ENCODE measurements at regions of chr1 and their contacts with region 1.

Region 1: GRCh38 chr1:179882243-179883039 is at the start of gene TOR1AIP1:
- DNase-seq: peak; percentile 89 to 97 (median 96)
- H3K4me3 ChIP-seq: peak within 1 kb of the TSS; percentile 59 to 97 (median 86)
- H3K27ac ChIP-seq: peak within 1 kb of the TSS; percentile 92 to 100 (median 100)
- H3K27me3 ChIP-seq: no peaks in the 10 kb centered on the region
- CTCF ChIP-seq: peak in 49 of 56 donors; percentile 12 to 64 (median 41)
- total RNA-seq, gene TOR1AIP1: 35.1 to 73.4 (median 45.9) TPM

Region 2: GRCh38 chr1:179954493-179955297 is 72.3 kb after region 1 on chr1 and contains the start of gene CEP350:
- intact Hi-C with region 1: loop called (anchors 1 kb)
- DNase-seq: peak; percentile 90 to 98 (median 96)
- H3K4me3 ChIP-seq: peak within 1 kb of the TSS; percentile 66 to 99 (median 93)
- H3K27ac ChIP-seq: peak within 1 kb of the TSS; percentile 52 to 99 (median 94)
- H3K27me3 ChIP-seq: no peaks in the 10 kb centered on the region
- CTCF ChIP-seq: peak in 37 of 56 donors; percentile 3 to 47 (median 22)
- total RNA-seq, gene CEP350: 49.3 to 111 (median 81.4) TPM

Measured in dorsolateral prefrontal cortex (tissue), 120 donors.